ENCODE measurements at regions of chr3 and their contacts with region 1.

Region 1: GRCh38 chr3:51706788-51707731 is at the start of gene GRM2:
- DNase-seq: peak; percentile 93
- ATAC-seq: peak; percentile 76
- H3K4me3 Mint-ChIP-seq: peak within 1 kb of the TSS; percentile 92
- H3K27ac Mint-ChIP-seq: no peak within 1 kb of the TSS
- H3K4me1 Mint-ChIP-seq: peaks cover 29% of the 10 kb centered on the region
- H3K27me3 Mint-ChIP-seq: peaks cover 28% of the 10 kb centered on the region
- CTCF ChIP-seq: no peak
- total RNA-seq, gene GRM2: 2.8 to 4.1 TPM (median 3.7 TPM) in 3 replicates

Region 2: GRCh38 chr3:51550047-51550819 is 156.8 kb before region 1 on chr3:
- CTCF ChIA-PET with region 1: no interaction called
- POLR2A ChIA-PET with region 1: no interaction called
- DNase-seq: no peak
- ATAC-seq: no peak
- H3K4me3 Mint-ChIP-seq: no peak overlapping the region
- H3K27ac Mint-ChIP-seq: no peak overlapping the region; the same call in 1 of the 2 replicates
- H3K4me1 Mint-ChIP-seq: peaks cover 6% of the 10 kb centered on the region; the same call in 1 of the 2 replicates
- H3K27me3 Mint-ChIP-seq: no peaks in the 10 kb centered on the region
- CTCF ChIP-seq: no peak

Region 3: DNA sequence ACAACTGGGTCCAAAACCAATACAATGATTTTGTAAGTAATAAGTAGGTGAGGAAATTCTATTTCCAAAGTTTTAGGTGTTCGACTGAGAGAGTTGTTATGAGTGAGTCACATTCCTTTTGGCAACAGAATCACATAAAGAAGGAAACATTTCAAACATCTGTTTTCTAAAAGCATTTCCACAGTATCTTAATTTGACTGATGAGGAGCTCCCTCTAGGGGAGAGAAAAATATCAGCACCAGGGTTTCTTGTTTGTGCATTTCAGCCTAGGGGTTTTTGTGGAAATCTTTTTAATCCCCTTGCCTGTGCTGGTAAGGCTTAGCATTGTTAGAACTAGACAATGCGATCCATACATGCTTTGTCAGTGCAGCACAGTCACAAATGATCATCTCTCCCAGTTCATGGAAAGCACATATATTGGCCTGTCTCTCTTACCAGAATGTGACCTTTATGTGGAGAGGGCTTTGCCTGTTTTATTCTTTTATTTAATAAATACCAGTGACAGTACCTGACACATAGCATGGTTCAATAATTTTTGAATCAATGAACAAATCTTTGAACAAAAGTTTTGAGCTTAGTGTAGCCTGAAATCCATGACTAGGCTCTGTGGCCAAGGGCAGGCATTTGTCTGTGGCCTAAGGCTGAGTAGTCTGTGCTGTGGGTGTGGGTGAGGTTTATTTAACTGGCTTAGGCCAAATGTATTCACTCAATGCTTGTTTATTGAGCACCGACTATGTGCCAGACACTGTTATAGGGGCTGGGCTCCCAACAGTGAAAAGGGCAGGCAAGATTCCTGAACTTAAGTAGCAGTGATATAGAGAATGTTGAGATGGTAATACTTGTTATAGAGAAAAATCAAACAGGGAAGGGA is 93.1 kb after region 1 on chr3:
- CTCF ChIA-PET with region 1: interaction called, 41 read pairs
- POLR2A ChIA-PET with region 1: no interaction called
- DNase-seq: no peak
- ATAC-seq: no peak
- H3K4me3 Mint-ChIP-seq: no peak overlapping the region
- H3K27ac Mint-ChIP-seq: peak overlapping the region; percentile 58; the same call in 1 of the 2 replicates
- H3K4me1 Mint-ChIP-seq: peaks cover 70% of the 10 kb centered on the region
- H3K27me3 Mint-ChIP-seq: no peaks in the 10 kb centered on the region
- CTCF ChIP-seq: peak; percentile 73